Caco-2 (cell line): ENCODE measurements at regions of chr18 and their contacts with region 1.

Region 1: GRCh38 chr18:78074400-78075020 is 824.9 kb downstream of the GALR1 start:
- DNase-seq: no peak
- H3K4me3 ChIP-seq: no peak overlapping the region
- H3K4me3 Mint-ChIP-seq: no peak overlapping the region
- H3K27ac Mint-ChIP-seq: no peak overlapping the region
- H3K4me1 ChIP-seq: no peaks in the 10 kb centered on the region
- H3K4me1 Mint-ChIP-seq: no peaks in the 10 kb centered on the region
- H3K27me3 ChIP-seq: no peaks in the 10 kb centered on the region
- H3K27me3 Mint-ChIP-seq: peaks cover 2% of the 10 kb centered on the region
- CTCF ChIP-seq: no peak

Region 2: DNA sequence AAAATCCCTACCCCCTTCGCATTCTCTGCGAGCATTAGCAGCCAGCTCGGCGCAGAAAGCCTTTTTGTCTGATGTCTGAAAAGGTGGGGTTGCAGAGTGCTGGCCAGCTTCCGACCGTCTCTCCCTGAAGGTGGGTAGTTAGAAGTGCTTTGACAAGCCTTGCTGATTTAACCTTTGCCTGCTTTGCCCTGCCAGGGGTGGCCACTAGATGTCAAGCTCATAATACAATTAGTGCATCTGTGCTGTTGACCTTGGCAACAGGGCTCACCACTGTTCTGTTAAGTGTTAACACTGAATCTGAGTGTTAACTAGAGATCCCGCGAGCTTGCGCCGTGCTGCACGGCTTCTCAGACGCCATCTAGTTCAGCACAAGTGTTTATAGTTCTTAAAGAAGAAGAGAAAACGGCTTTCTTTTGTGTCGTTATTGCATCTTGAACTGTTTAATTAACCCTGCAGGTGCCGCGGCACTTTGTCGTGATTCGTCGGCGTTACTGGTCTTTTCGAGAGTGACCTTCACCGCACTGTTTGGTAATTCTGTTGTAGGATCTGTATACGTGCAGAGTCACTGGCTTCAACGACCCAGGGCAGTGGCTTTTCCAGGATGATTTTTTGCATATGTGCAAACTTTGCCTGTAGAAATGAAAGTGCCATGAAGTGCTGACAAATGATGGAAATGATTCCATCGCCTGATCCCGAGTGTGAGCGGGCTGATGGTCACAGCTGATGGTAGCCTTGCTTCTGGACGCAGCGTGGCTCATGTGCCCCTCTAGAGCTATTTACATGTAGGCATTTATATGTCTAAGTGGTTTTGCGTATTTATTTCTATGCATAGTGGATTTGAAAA is 910.7 kb after region 1 on chr18:
- CTCF ChIA-PET with region 1: no interaction called
- POLR2A ChIA-PET with region 1: no interaction called
- intact Hi-C with region 1: loop called (anchors 5 kb)
- DNase-seq: peak in 1 of 2 experiments; percentile 3
- H3K4me3 ChIP-seq: no peak overlapping the region
- H3K4me3 Mint-ChIP-seq: no peak overlapping the region
- H3K27ac Mint-ChIP-seq: no peak overlapping the region
- H3K4me1 ChIP-seq: no peaks in the 10 kb centered on the region
- H3K4me1 Mint-ChIP-seq: no peaks in the 10 kb centered on the region
- H3K27me3 ChIP-seq: no peaks in the 10 kb centered on the region
- H3K27me3 Mint-ChIP-seq: no peaks in the 10 kb centered on the region
- CTCF ChIP-seq: no peak